B cell (primary cell): ENCODE measurements at regions of chr3 and their contacts with region 1.

Region 1: GRCh38 chr3:113745273-113746068 is 578 bp downstream of the NAA50 start:
- DNase-seq: peak; percentile 91
- ATAC-seq: peak; percentile 58
- H3K4me3 ChIP-seq: peak overlapping the region; percentile 75 to 94 (median 85)
- H3K4me3 Mint-ChIP-seq: peak overlapping the region; percentile 97
- H3K27ac ChIP-seq: peak overlapping the region; percentile 96 to 99
- H3K27ac Mint-ChIP-seq: peak overlapping the region; percentile 100
- H3K4me1 ChIP-seq: peaks cover 32 to 46% of the 10 kb centered on the region in 2 donors
- H3K4me1 Mint-ChIP-seq: peaks cover 67% of the 10 kb centered on the region
- H3K27me3 ChIP-seq: no peaks in the 10 kb centered on the region
- H3K27me3 Mint-ChIP-seq: no peaks in the 10 kb centered on the region
- CTCF ChIP-seq: peak; percentile 76

Region 2: GRCh38 chr3:112199619-112200316 is 1545.7 kb before region 1 on chr3:
- CTCF ChIA-PET with region 1: no interaction called
- POLR2A ChIA-PET with region 1: no interaction called
- intact Hi-C with region 1: no loop called
- DNase-seq: no peak
- ATAC-seq: no peak
- H3K4me3 ChIP-seq: no peak overlapping the region
- H3K4me3 Mint-ChIP-seq: no peak overlapping the region
- H3K27ac ChIP-seq: no peak overlapping the region
- H3K27ac Mint-ChIP-seq: no peak overlapping the region
- H3K4me1 ChIP-seq: no peaks in the 10 kb centered on the region
- H3K4me1 Mint-ChIP-seq: no peaks in the 10 kb centered on the region
- H3K27me3 ChIP-seq: no peaks in the 10 kb centered on the region
- H3K27me3 Mint-ChIP-seq: no peaks in the 10 kb centered on the region
- CTCF ChIP-seq: no peak

Region 3: DNA sequence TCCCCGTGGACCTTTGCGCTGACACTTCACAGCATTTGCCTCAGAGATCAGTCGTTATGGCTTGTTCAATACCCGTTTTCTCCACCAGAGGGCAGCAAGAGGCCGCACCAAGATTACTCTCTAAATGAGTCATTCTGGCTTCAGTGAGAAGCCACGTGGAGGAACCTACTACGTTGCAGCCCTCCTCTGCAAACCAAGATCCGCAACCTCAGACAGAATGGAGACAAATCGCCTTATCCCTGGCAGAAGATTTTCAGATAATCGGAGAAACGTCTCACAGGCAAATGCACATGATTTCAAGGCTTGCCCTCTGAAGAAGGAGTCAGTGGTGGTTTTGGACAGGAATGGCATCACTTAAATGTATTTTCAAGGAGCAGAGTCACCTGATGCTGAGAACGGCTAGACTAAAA is 694.2 kb before region 1 on chr3:
- CTCF ChIA-PET with region 1: no interaction called
- POLR2A ChIA-PET with region 1: no interaction called
- intact Hi-C with region 1: loop called (anchors 10 kb)
- DNase-seq: peak; percentile 88
- ATAC-seq: peak; percentile 100
- H3K4me3 ChIP-seq: no peak overlapping the region
- H3K4me3 Mint-ChIP-seq: no peak overlapping the region
- H3K27ac ChIP-seq: no peak overlapping the region
- H3K27ac Mint-ChIP-seq: no peak overlapping the region
- H3K4me1 ChIP-seq: peaks cover 0 to 4% of the 10 kb centered on the region in 2 donors
- H3K4me1 Mint-ChIP-seq: peaks cover 2% of the 10 kb centered on the region
- H3K27me3 ChIP-seq: no peaks in the 10 kb centered on the region
- H3K27me3 Mint-ChIP-seq: no peaks in the 10 kb centered on the region
- CTCF ChIP-seq: peak; percentile 95

Region 4: DNA sequence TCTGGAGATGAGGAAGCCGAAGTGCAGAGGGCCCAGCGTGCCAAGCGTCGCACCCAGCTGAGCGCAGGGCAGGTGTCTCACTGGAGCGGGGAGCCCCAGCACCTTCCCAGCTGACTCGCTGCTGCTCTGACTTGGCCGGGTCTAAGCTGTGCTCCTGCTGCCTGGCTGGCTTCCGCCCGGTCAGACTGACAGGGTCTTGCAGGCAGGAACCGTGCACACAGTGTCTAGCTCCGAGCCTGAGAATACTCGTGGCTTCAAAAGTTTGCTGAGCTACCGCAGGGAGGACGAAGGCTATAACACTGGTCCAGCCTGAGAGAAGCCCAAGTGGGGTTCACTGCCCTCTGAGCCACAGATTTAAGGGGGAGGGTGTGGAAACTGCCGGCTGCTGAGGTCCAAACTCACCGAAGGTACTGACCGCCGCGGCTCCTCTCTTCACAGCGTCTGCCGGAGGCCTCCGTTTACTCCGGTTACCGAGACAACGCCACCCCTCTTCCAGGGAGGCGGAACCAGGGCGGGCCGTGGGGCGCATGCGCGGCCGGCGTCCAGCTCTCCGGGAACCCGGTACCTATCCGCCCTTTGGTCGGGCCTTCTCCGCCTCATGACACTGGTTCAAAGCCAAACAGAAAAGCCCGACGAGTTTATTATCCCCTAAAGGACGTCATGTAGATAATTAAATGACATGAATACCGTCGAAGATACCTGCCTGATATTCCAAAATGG is 304.3 kb before region 1 on chr3 and contains the start of gene CFAP44:
- CTCF ChIA-PET with region 1: no interaction called
- POLR2A ChIA-PET with region 1: no interaction called
- intact Hi-C with region 1: no loop called
- DNase-seq: peak; percentile 72
- ATAC-seq: peak; percentile 66
- H3K4me3 ChIP-seq: peak within 1 kb of the TSS in 4 of 5 experiments; percentile 36 to 46 (median 40)
- H3K4me3 Mint-ChIP-seq: peak within 1 kb of the TSS; percentile 63
- H3K27ac ChIP-seq: no peak within 1 kb of the TSS
- H3K27ac Mint-ChIP-seq: no peak within 1 kb of the TSS
- H3K4me1 ChIP-seq: peaks cover 0 to 5% of the 10 kb centered on the region in 2 donors
- H3K4me1 Mint-ChIP-seq: peaks cover 2% of the 10 kb centered on the region
- H3K27me3 ChIP-seq: no peaks in the 10 kb centered on the region
- H3K27me3 Mint-ChIP-seq: no peaks in the 10 kb centered on the region
- CTCF ChIP-seq: no peak
- total RNA-seq, gene CFAP44: 33.8 and 35.0 TPM in 2 replicates

Region 5: GRCh38 chr3:113552851-113553250 is 192.6 kb before region 1 on chr3:
- CTCF ChIA-PET with region 1: interaction called, 16 read pairs
- POLR2A ChIA-PET with region 1: no interaction called
- intact Hi-C with region 1: loop called (anchors 1 kb)
- DNase-seq: peak; percentile 68
- ATAC-seq: peak; percentile 62
- H3K4me3 ChIP-seq: no peak overlapping the region
- H3K4me3 Mint-ChIP-seq: no peak overlapping the region
- H3K27ac ChIP-seq: peak overlapping the region in 1 of 2 donors; percentile 42
- H3K27ac Mint-ChIP-seq: peak overlapping the region; percentile 22
- H3K4me1 ChIP-seq: peaks cover 4 to 6% of the 10 kb centered on the region in 2 donors
- H3K4me1 Mint-ChIP-seq: peaks cover 21% of the 10 kb centered on the region
- H3K27me3 ChIP-seq: no peaks in the 10 kb centered on the region
- H3K27me3 Mint-ChIP-seq: no peaks in the 10 kb centered on the region
- CTCF ChIP-seq: peak; percentile 64

Region 6: DNA sequence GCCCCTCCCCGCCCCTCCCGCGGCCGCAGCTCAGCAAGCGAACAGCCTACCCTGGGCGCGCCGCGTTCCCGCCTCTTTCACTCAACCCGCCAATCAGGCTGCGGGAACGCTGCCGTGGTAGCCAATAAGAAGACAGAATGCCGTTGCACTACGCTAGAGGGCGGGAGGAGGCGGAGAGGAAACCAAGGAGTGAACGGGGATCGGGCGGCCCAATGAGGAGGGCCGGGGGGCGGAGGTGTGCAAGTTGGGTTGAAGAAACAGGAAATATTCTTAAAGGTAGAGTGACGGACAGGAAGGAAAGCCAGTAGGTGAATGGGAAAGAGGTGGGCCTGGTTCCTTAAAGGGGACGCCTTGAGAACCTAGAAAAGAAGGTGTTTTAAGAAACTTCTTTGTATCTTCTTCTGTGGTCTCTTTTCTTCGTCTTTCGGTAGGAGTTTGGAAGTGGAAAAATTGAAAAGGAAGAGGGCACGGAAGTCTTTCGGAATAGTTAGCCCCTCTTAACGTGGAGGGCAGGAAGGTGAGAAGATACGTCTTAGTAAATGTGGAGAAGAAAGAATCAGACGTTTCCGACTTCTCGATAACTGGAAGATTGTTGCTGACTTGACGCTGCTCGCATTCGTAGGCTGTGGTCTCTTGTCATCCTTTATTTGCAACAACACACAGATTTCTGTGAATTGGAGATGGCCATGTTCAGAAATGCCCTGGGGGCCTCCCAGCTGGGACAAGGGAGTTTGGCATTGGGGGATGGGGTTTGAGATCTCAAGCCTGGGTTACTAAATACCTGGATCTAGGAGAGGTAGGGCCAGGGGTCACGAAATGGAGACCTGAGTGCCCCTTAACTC is 48.6 kb before region 1 on chr3:
- CTCF ChIA-PET with region 1: interaction called, 8 read pairs
- POLR2A ChIA-PET with region 1: interaction called, 12 read pairs
- intact Hi-C with region 1: loop called (anchors 1 kb)
- DNase-seq: peak; percentile 100
- ATAC-seq: peak; percentile 87
- H3K4me3 ChIP-seq: peak overlapping the region; percentile 73 to 100 (median 90)
- H3K4me3 Mint-ChIP-seq: no peak overlapping the region
- H3K27ac ChIP-seq: peak overlapping the region; percentile 81 to 90
- H3K27ac Mint-ChIP-seq: no peak overlapping the region
- H3K4me1 ChIP-seq: peaks cover 39 to 40% of the 10 kb centered on the region in 2 donors
- H3K4me1 Mint-ChIP-seq: peaks cover 27% of the 10 kb centered on the region
- H3K27me3 ChIP-seq: no peaks in the 10 kb centered on the region
- H3K27me3 Mint-ChIP-seq: no peaks in the 10 kb centered on the region
- CTCF ChIP-seq: no peak

Region 7: DNA sequence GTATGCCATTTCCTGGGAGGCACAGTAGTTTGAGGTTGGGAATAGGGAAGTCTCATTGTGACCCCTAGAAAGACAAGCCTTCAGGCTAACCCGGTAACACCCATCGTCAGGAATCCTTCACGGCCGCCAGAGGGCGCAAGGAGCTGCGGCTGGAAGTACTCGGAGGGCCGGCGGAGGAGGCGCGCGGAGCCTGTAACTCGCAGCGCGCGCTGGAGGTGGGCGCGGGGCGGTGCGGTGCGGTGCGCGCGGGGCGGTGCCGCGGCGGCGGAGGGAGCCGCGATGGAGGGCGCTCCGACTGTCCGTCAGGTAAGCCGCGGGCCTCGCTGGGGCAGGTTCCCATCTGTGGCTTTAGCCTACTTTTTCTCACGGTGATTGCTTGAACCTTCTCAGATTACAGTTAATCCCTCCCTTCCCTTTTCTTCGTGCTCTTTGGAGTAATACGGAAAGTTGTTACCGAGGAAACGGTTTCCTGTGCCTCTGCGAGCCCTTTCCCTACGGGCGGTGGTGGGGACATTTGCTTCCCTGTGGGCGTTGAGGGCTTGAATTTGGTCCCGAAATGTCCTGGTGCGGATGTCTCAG is 93.2 kb after region 1 on chr3 and contains the start of gene GRAMD1C:
- CTCF ChIA-PET with region 1: interaction called, 42 read pairs
- POLR2A ChIA-PET with region 1: interaction called, 9 read pairs
- intact Hi-C with region 1: loop called (anchors 2 kb)
- DNase-seq: peak; percentile 92
- ATAC-seq: peak; percentile 99
- H3K4me3 ChIP-seq: peak within 1 kb of the TSS; percentile 59 to 84 (median 70)
- H3K4me3 Mint-ChIP-seq: peak within 1 kb of the TSS; percentile 91
- H3K27ac ChIP-seq: peak within 1 kb of the TSS; percentile 8 to 62
- H3K27ac Mint-ChIP-seq: peak within 1 kb of the TSS; percentile 71
- H3K4me1 ChIP-seq: peaks cover 7 to 13% of the 10 kb centered on the region in 2 donors
- H3K4me1 Mint-ChIP-seq: peaks cover 29% of the 10 kb centered on the region
- H3K27me3 ChIP-seq: no peaks in the 10 kb centered on the region
- H3K27me3 Mint-ChIP-seq: no peaks in the 10 kb centered on the region
- CTCF ChIP-seq: peak; percentile 84
- total RNA-seq, gene GRAMD1C: 47.1 and 52.5 TPM in 2 replicates

Region 8: GRCh38 chr3:114056130-114057010 is 310.9 kb after region 1 on chr3 and contains the starts of genes CCDC191 and QTRT2:
- CTCF ChIA-PET with region 1: no interaction called
- POLR2A ChIA-PET with region 1: no interaction called
- intact Hi-C with region 1: loop called (anchors 1 kb)
- DNase-seq: peak; percentile 99
- ATAC-seq: peak; percentile 95
- H3K4me3 ChIP-seq: peak within 1 kb of the TSS; percentile 71 to 100 (median 74)
- H3K4me3 Mint-ChIP-seq: peak within 1 kb of the TSS; percentile 95
- H3K27ac ChIP-seq: peak within 1 kb of the TSS; percentile 82 to 93
- H3K27ac Mint-ChIP-seq: peak within 1 kb of the TSS; percentile 96
- H3K4me1 ChIP-seq: peaks cover 36 to 46% of the 10 kb centered on the region in 2 donors
- H3K4me1 Mint-ChIP-seq: peaks cover 59% of the 10 kb centered on the region
- H3K27me3 ChIP-seq: no peaks in the 10 kb centered on the region
- H3K27me3 Mint-ChIP-seq: no peaks in the 10 kb centered on the region
- CTCF ChIP-seq: no peak
- total RNA-seq, gene CCDC191: 47.9 and 52.5 TPM in 2 replicates
- total RNA-seq, gene QTRT2: 59.5 and 61.8 TPM in 2 replicates